K562 (cell line): ENCODE measurements at regions of chr10 and their contacts with region 1.

Region 1: GRCh38 chr10:43417950-43418768 is 9.2 kb upstream of the HNRNPF start:
- DNase-seq: peak; percentile 97 to 100 (median 98)
- ATAC-seq: peak; percentile 83
- H3K4me3 ChIP-seq: no peak overlapping the region
- H3K27ac ChIP-seq: peak overlapping the region; percentile 91
- H3K4me1 ChIP-seq: peaks cover 45 to 67% of the 10 kb centered on the region in 2 experiments
- H3K27me3 ChIP-seq: no peaks in the 10 kb centered on the region
- CTCF ChIP-seq: no peak
- EP300 ChIP-seq: peak; percentile 100
- POLR2A ChIP-seq: peak; percentile 66
- RAD21 ChIP-seq: no peak; a peak in 3 of 4 replicates

Region 2: GRCh38 chr10:43407576-43408330 is 10.4 kb before region 1 on chr10:
- CTCF ChIA-PET with region 1: no interaction called
- POLR2A ChIA-PET with region 1: interaction called, 22 read pairs
- in situ Hi-C with region 1: no loop called
- intact Hi-C with region 1: loop called (anchors 1 kb)
- DNase-seq: peak; percentile 70 to 97 (median 82)
- ATAC-seq: peak; percentile 69
- H3K4me3 ChIP-seq: peak overlapping the region; percentile 82
- H3K27ac ChIP-seq: peak overlapping the region; percentile 91
- H3K4me1 ChIP-seq: peaks cover 22 to 50% of the 10 kb centered on the region in 2 experiments; a peak in 4 of 5 replicates
- H3K27me3 ChIP-seq: no peaks in the 10 kb centered on the region
- CTCF ChIP-seq: peak; percentile 49 to 69 (median 52)
- EP300 ChIP-seq: peak; percentile 73
- POLR2A ChIP-seq: peak; percentile 99
- RAD21 ChIP-seq: peak in 1 of 2 experiments; percentile 63; a peak in 3 of 4 replicates

Region 3: GRCh38 chr10:43574001-43574892 is 156.1 kb after region 1 on chr10 and contains the start of gene ZNF239:
- CTCF ChIA-PET with region 1: no interaction called
- POLR2A ChIA-PET with region 1: no interaction called
- in situ Hi-C with region 1: no loop called
- intact Hi-C with region 1: no loop called
- DNase-seq: peak; percentile 93 to 98 (median 94)
- ATAC-seq: peak; percentile 98
- H3K4me3 ChIP-seq: peak within 1 kb of the TSS; percentile 61
- H3K27ac ChIP-seq: peak within 1 kb of the TSS; percentile 80
- H3K4me1 ChIP-seq: peaks cover 8 to 17% of the 10 kb centered on the region in 2 experiments; a peak in 3 of 5 replicates
- H3K27me3 ChIP-seq: no peaks in the 10 kb centered on the region
- CTCF ChIP-seq: no peak
- EP300 ChIP-seq: peak; percentile 3; the same call in 1 of the 2 replicates
- POLR2A ChIP-seq: peak; percentile 76
- RAD21 ChIP-seq: peak in 1 of 2 experiments; percentile 12; a peak in 1 of 4 replicates
- polyA plus RNA-seq, gene ZNF239: 14.2 to 23.6 TPM